ENCODE measurements at regions of chr6 and their contacts with region 1.

Region 1: GRCh38 chr6:106444777-106445507 is 84.4 kb downstream of the CRYBG1 start:
- DNase-seq: no peak
- ATAC-seq: peak in 3 of 4 donors; percentile 59 to 68 (median 67)
- H3K4me3 ChIP-seq: no peak overlapping the region
- H3K27ac ChIP-seq: no peak overlapping the region
- H3K4me1 ChIP-seq: peaks cover 0 to 23% (median 0%) of the 10 kb centered on the region in 12 donors
- H3K27me3 ChIP-seq: peaks cover 0 to 39% (median 3%) of the 10 kb centered on the region in 9 donors
- CTCF ChIP-seq: peak; percentile 70 to 87 (median 76)
- POLR2A ChIP-seq: no peak

Region 2: DNA sequence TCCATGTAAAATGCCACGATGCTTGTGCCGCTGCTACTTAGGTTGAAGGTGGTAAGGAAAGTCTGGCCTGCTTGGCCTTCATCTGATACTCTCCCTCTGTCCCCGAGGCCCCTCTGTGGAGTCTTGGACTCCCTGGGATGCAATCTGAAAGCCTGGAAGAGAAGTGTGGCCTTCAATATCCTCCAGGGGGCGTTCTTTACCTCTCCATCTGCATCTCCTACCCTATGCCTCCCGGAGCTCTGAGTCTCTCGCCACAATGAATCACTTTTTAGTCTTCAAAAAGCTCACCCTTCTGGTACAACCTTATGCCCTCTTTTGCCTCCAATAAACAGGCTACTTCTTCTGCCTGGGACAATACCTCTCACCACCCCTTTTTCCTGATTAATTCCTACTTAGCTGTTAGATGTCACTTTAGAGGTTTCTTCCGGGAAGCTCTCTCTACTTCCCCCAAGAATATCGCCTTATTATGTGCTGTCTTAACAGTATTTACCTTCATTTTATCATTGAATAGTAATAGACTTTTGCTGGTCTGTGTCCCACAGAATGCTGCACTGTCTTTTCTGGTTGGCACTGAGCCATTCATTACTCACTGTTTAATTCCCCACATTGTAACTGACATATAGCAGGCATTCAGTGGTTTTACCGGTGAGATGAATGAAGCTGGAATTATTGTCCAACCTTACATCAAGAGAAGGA is 105.5 kb before region 1 on chr6:
- intact Hi-C with region 1: loop called in 1 of 10 experiments (anchors 10 kb)
- DNase-seq: peak in 3 of 5 donors; percentile 9 to 30 (median 24)
- ATAC-seq: peak in 3 of 4 donors; percentile 71 to 88 (median 82)
- H3K4me3 ChIP-seq: peak overlapping the region in 1 of 12 donors; percentile 7
- H3K27ac ChIP-seq: no peak overlapping the region
- H3K4me1 ChIP-seq: peaks cover 0 to 5% (median 0%) of the 10 kb centered on the region in 12 donors
- H3K27me3 ChIP-seq: peaks cover 0 to 5% (median 0%) of the 10 kb centered on the region in 9 donors
- CTCF ChIP-seq: peak; percentile 54 to 74 (median 65)
- POLR2A ChIP-seq: no peak